MCF 10A (cell line): ENCODE measurements at regions of chr2 and their contacts with region 1.

Region 1: DNA sequence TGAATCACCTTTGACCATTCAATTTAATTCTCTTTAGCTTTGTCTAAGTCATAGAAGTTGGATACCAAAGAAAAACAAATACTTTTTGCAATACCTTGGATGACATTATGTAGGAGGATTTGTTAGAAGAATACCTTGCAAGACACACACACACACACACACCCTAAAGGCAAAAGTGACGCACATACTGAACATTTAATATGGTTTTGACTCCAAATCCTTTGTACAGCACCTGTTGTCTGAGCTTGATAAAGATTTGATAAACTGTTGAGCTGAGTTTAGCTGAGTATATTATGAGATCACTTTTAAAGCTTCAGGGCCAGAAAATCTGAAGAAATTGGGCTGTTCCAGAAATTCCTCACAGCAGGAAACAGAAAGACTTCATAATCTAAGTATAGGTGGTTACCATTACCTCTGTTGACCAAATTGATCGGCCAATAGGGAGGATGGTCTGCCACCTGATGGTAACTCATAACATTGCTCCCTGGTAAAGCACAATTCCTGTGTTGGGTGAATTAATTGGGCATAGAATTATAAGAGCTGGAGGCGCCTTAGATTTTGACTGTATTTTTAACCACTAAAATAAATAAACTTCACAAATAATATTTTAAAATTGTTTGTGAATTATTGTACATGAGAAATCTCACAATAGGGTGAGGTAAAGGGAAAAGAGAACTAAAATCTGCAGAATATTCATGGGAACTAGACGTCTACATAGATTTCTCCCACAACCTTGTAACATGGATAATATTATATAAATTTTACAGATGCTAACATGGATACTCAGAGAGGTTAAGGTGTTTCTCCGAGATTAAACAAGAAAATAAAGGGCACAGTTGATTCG is 21.9 kb upstream of the RPIA start:
- DNase-seq: peak; percentile 62
- H3K4me3 Mint-ChIP-seq: no peak overlapping the region
- H3K27ac Mint-ChIP-seq: no peak overlapping the region
- H3K4me1 Mint-ChIP-seq: no peaks in the 10 kb centered on the region
- H3K27me3 Mint-ChIP-seq: no peaks in the 10 kb centered on the region
- CTCF ChIP-seq: peak; percentile 65

Region 2: GRCh38 chr2:88350331-88351248 is 319.0 kb before region 1 on chr2:
- CTCF ChIA-PET with region 1: interaction called, 3 read pairs
- POLR2A ChIA-PET with region 1: no interaction called
- intact Hi-C with region 1: loop called (anchors 10 kb)
- DNase-seq: peak; percentile 70
- H3K4me3 Mint-ChIP-seq: peak overlapping the region; percentile 67
- H3K27ac Mint-ChIP-seq: no peak overlapping the region
- H3K4me1 Mint-ChIP-seq: no peaks in the 10 kb centered on the region
- H3K27me3 Mint-ChIP-seq: peaks cover 18% of the 10 kb centered on the region
- CTCF ChIP-seq: peak; percentile 81

Region 3: DNA sequence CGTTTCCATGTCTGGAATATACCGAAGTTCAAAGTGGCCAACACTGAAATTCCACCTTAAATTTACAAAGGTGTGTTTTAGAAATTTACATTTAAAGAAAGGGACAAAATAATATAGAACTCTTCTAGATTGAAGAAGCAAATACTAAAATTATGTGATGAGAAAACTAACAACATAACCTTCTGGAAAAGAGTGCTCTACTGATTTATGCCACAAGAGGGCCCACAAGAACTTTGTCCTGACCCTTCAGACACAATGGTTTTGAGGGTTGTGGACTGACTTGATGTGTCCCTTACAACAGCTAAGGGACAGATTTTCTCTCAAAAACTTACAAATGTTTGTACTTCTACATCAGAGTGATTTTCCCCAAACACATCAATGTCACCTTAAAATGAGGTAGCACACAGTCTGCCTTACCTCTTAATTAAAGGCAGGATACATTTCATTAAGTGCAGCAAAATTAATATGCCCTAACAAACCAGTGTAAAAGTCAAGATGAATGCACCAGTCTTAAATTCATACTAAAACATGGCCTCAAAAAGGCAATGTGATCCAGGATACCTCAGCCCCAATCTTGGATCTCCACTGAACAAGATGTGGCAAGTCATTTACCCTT is 78.5 kb before region 1 on chr2:
- CTCF ChIA-PET with region 1: interaction called, 424 read pairs
- POLR2A ChIA-PET with region 1: interaction called, 5 read pairs
- intact Hi-C with region 1: loop called (anchors 1 kb)
- DNase-seq: peak; percentile 73
- H3K4me3 Mint-ChIP-seq: no peak overlapping the region
- H3K27ac Mint-ChIP-seq: no peak overlapping the region
- H3K4me1 Mint-ChIP-seq: no peaks in the 10 kb centered on the region
- H3K27me3 Mint-ChIP-seq: no peaks in the 10 kb centered on the region
- CTCF ChIP-seq: peak; percentile 58

Region 4: DNA sequence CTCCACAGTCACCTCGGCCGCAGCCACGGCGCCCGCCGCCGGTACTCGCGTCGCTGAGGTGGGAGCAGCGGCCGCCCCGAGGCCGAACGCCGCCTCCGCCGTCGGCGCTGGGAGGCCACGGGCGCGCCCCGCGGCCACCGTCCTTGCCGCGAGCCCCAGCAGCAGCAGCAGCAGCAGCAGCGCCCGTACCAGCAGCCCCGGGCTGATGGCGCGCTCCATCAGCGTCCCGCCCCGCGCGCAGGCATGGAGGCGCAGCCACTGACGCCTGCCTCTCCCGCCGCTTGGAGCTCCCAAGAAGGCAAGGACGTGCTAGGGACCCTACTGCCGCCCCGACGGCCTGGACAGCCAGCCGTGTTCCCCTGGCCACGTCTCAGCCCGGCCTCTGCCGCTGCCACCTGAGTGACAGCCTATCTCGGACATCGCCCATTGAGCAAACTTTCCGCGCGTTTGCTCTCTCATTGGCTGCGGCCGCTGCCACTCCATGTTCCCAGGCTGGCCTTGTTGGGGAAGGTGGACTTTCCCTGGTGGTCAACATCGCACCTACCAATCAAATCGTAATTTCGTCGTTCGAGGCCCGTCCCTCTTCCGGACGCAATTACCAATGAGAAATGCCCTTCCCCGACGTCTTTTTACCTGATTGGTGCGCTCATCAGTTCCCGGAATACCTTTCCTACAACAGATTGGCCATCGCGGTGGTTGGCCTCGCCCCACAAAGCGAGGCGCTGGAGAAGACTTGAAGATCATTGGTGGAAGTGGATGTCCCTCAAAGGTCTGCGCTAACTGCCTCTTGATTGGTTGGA is 42.3 kb before region 1 on chr2 and contains the start of gene EIF2AK3:
- CTCF ChIA-PET with region 1: interaction called, 29 read pairs
- POLR2A ChIA-PET with region 1: interaction called, 20 read pairs
- intact Hi-C with region 1: loop called (anchors 2 kb)
- DNase-seq: peak; percentile 100
- H3K4me3 Mint-ChIP-seq: no peak within 1 kb of the TSS
- H3K27ac Mint-ChIP-seq: no peak within 1 kb of the TSS
- H3K4me1 Mint-ChIP-seq: no peaks in the 10 kb centered on the region
- H3K27me3 Mint-ChIP-seq: no peaks in the 10 kb centered on the region
- CTCF ChIP-seq: no peak
- total RNA-seq, gene EIF2AK3: 21.6 and 21.8 TPM in 2 replicates

Region 5: DNA sequence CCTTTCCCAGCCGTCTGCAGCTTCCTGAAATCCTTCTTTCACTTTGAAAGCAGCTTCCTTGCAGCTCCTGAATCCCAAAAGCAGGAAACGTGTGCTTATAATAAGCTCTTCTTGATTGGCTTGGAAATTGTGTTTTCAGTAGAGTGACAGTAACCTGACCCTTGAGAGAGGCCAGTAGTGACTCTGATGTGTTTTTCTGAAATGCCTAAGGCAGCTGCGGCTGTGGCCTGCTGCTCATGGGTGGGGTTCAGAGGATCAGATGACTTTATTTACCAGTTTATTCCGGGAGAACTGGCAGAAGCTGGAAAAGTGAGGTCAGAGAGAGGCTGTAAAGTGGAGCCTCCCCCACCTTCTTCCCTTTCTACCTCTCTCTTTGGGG is 10.1 kb before region 1 on chr2:
- CTCF ChIA-PET with region 1: interaction called, 54 read pairs
- POLR2A ChIA-PET with region 1: interaction called, 8 read pairs
- intact Hi-C with region 1: no loop called
- DNase-seq: peak; percentile 71
- H3K4me3 Mint-ChIP-seq: peak overlapping the region; percentile 21
- H3K27ac Mint-ChIP-seq: peak overlapping the region; percentile 86
- H3K4me1 Mint-ChIP-seq: peaks cover 21% of the 10 kb centered on the region
- H3K27me3 Mint-ChIP-seq: no peaks in the 10 kb centered on the region
- CTCF ChIP-seq: no peak

Region 6: GRCh38 chr2:88691339-88692183 is 22.0 kb after region 1 on chr2 and contains the start of gene RPIA:
- CTCF ChIA-PET with region 1: interaction called, 33 read pairs
- POLR2A ChIA-PET with region 1: interaction called, 7 read pairs
- intact Hi-C with region 1: no loop called
- DNase-seq: peak; percentile 98
- H3K4me3 Mint-ChIP-seq: peak within 1 kb of the TSS; percentile 84
- H3K27ac Mint-ChIP-seq: peak within 1 kb of the TSS; percentile 36
- H3K4me1 Mint-ChIP-seq: peaks cover 27% of the 10 kb centered on the region
- H3K27me3 Mint-ChIP-seq: no peaks in the 10 kb centered on the region
- CTCF ChIP-seq: peak; percentile 30
- total RNA-seq, gene RPIA: 12.2 and 14.1 TPM in 2 replicates